Natural killer cell (primary cell): ENCODE measurements at regions of chr12 and their contacts with region 1.

Region 1: DNA sequence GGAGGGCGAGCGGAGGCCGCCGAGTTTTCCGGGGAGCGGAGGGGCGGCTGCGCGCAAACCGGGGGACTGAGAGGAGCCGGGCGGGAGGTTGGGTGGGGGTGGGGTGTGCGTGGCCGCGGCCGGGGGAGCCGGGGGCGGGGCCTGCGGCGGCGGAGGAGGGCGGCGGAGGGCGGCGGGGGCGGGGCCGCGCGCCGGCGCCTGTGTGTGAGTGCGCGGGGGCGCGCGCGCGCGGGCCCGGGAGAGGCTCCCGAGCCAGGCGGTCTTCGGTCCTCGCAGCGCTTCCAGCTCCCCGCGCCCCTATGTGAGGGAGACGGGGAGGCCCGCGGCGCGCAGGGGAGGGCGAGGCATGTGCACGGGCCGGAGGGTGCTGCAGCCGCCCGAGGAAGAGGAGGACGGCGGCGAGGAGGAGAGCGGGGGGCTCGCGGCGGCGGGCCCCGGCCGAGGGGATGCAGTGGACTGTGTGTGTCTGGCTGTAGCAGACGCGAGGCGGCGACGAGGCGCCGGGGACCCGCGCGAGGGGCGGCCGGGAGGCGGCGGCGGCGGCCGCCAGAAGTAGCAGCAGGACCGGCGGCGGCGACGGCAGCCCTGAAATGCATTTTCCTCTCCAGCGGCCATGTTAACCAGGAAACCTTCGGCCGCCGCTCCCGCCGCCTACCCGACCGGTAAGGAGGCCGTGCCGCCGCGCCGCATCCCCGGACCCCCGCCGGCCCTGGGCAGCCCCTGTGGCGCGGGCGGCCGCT is at the start of gene DYRK2:
- DNase-seq: peak; percentile 77 to 91
- ATAC-seq: peak; percentile 62 to 80 (median 73)
- H3K4me3 ChIP-seq: peak within 1 kb of the TSS; percentile 94
- H3K4me3 Mint-ChIP-seq: peak within 1 kb of the TSS; percentile 88
- H3K27ac ChIP-seq: peak within 1 kb of the TSS; percentile 92
- H3K27ac Mint-ChIP-seq: peak within 1 kb of the TSS; percentile 90 to 91
- H3K4me1 ChIP-seq: peaks cover 36% of the 10 kb centered on the region
- H3K4me1 Mint-ChIP-seq: peaks cover 34 to 44% of the 10 kb centered on the region in 2 donors
- H3K27me3 ChIP-seq: no peaks in the 10 kb centered on the region
- H3K27me3 Mint-ChIP-seq: no peaks in the 10 kb centered on the region
- CTCF ChIP-seq: no peak
- total RNA-seq, gene DYRK2: 88.1 to 108 (median 108) TPM

Region 2: DNA sequence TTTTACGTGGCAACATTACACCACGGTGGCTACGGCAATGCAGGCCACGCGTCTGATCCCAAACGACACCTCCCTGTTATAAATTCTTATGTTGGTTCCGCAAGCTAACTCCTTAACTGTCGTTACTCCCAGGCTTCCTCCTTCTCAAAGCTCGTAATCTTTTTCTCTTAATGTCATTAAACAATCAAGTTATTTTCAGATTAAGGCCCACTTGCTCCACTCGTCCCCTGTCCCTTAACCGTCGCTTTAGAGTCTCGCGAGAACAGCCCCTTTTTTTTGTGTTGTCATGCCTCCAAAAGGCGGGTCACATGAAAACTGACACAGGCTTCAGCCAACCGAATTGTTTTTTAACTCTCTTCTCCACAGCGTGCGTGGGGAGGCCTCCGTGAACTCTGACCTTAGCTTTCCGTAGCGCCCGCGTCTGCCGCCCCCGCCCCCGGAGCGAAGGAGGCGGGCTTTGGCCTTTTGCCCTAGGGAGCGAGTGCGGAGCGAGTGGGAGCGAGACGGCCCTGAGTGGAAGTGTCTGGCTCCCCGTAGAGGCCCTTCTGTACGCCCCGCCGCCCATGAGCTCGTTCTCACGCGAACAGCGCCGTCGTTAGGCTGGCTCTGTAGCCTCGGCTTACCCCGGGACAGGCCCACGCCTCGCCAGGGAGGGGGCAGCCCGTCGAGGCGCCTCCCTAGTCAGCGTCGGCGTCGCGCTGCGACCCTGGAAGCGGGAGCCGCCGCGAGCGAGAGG is 379.6 kb before region 1 on chr12 and contains the start of gene CAND1:
- intact Hi-C with region 1: loop called (anchors 2 kb)
- DNase-seq: peak; percentile 92 to 99
- ATAC-seq: peak; percentile 81 to 93 (median 83)
- H3K4me3 ChIP-seq: peak within 1 kb of the TSS; percentile 88
- H3K4me3 Mint-ChIP-seq: peak within 1 kb of the TSS; percentile 83
- H3K27ac ChIP-seq: peak within 1 kb of the TSS; percentile 97
- H3K27ac Mint-ChIP-seq: peak within 1 kb of the TSS; percentile 95 to 97
- H3K4me1 ChIP-seq: peaks cover 21% of the 10 kb centered on the region
- H3K4me1 Mint-ChIP-seq: peaks cover 36 to 43% of the 10 kb centered on the region in 2 donors
- H3K27me3 ChIP-seq: no peaks in the 10 kb centered on the region
- H3K27me3 Mint-ChIP-seq: no peaks in the 10 kb centered on the region
- CTCF ChIP-seq: no peak
- total RNA-seq, gene CAND1: 103 to 118 (median 104) TPM

Region 3: GRCh38 chr12:67441736-67442346 is 206.8 kb before region 1 on chr12:
- intact Hi-C with region 1: loop called (anchors 5 kb)
- DNase-seq: peak; percentile 59 to 88
- ATAC-seq: peak; percentile 82 to 97 (median 97)
- H3K4me3 ChIP-seq: no peak overlapping the region
- H3K4me3 Mint-ChIP-seq: peak overlapping the region; percentile 25
- H3K27ac ChIP-seq: no peak overlapping the region
- H3K27ac Mint-ChIP-seq: peak overlapping the region in 1 of 2 donors; percentile 77
- H3K4me1 ChIP-seq: peaks cover 15% of the 10 kb centered on the region
- H3K4me1 Mint-ChIP-seq: peaks cover 28 to 33% of the 10 kb centered on the region in 2 donors
- H3K27me3 ChIP-seq: no peaks in the 10 kb centered on the region
- H3K27me3 Mint-ChIP-seq: no peaks in the 10 kb centered on the region
- CTCF ChIP-seq: peak; percentile 83

Region 4: GRCh38 chr12:67519484-67520433 is 128.9 kb before region 1 on chr12:
- intact Hi-C with region 1: no loop called
- DNase-seq: no peak
- ATAC-seq: no peak
- H3K4me3 ChIP-seq: no peak overlapping the region
- H3K4me3 Mint-ChIP-seq: no peak overlapping the region
- H3K27ac ChIP-seq: no peak overlapping the region
- H3K27ac Mint-ChIP-seq: no peak overlapping the region
- H3K4me1 ChIP-seq: peaks cover 26% of the 10 kb centered on the region
- H3K4me1 Mint-ChIP-seq: peaks cover 16 to 25% of the 10 kb centered on the region in 2 donors
- H3K27me3 ChIP-seq: no peaks in the 10 kb centered on the region
- H3K27me3 Mint-ChIP-seq: no peaks in the 10 kb centered on the region
- CTCF ChIP-seq: no peak

Region 5: DNA sequence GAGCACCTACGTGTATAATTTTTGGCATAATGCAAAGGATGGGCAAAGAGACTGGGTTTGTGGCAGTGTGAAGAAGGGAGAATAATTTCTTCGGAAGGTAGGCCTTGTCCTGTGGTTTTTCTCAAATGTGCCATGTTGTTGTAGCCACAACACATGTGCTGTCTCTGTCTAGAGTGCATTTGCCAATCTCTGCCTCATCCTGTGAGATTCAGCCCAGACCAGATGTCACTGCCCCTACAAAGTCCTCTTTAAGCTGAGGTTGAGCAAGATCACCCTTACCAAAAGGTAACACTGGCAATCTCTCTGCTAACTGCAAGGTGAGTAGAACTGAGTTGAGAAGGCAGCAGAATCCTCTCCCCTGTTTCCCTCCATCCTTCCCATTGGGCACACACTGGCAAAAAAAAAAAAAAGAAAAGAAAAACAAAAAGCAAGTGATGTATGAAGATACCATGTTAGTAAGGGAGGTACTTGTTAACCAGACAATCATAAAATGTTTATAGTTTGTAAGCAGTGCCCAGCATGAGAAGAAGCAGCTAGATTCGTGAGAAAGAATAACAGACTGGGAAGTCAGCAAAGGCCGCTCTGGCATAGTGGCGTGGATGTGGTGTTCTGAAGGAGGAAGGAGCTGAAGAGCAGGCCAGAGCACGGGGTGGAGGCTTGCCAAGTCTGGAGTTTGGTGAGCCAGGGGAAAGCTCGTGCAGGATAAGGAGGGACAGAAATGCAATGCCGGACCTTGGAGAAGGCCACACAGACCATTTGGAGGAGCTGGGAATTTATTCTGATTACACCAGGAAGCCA is 18.8 kb after region 1 on chr12:
- intact Hi-C with region 1: loop called (anchors 2 kb)
- DNase-seq: no peak
- ATAC-seq: peak; percentile 52 to 73 (median 68)
- H3K4me3 ChIP-seq: no peak overlapping the region
- H3K4me3 Mint-ChIP-seq: peak overlapping the region; percentile 2
- H3K27ac ChIP-seq: peak overlapping the region; percentile 2
- H3K27ac Mint-ChIP-seq: peak overlapping the region; percentile 86 to 87
- H3K4me1 ChIP-seq: peaks cover 28% of the 10 kb centered on the region
- H3K4me1 Mint-ChIP-seq: peaks cover 70 to 73% of the 10 kb centered on the region in 2 donors
- H3K27me3 ChIP-seq: no peaks in the 10 kb centered on the region
- H3K27me3 Mint-ChIP-seq: no peaks in the 10 kb centered on the region
- CTCF ChIP-seq: no peak

Region 6: DNA sequence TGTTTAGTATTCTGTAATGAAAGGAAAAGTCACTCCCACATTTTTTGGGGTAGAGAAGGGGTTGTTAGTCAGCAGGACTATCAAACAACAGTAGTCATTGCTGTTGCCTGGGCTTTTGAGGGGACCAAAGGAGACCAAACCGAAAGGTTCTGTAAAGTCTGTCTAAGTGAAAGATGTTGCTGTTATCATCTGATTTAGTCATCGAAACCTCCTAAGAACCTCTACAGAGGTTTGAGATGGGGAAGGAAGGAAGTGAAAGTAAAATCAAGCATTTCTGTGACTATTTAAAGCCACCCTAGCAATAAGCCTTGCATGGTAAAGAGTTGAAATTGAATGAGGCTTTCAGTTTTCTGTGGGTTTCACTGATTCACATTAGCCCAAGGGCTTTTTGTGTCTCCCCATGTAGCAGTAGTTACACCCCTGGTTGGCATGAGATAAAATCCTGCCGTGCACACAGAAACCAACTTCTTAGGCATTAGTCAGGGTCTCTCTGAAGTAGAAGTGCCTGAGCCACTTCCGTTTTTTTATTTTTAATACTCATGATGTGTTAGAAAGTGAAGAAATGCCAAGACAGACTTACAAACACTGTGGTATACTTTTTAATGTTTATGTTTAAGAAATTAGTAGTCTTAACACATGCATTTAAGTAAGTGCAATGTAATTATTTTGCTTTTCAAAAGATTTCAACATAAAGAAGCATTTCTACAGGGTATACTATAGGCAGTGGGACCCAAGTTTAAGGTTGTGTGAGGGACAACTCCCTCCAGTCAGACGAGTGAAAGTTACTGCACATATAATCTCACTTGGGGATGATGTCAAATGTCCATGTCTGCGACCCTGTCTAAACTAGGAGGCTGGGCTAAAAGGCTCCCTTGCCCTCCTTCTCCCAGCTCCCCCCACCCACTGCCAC is 50.2 kb after region 1 on chr12:
- intact Hi-C with region 1: loop called (anchors 5 kb)
- DNase-seq: peak; percentile 31 to 67
- ATAC-seq: peak; percentile 84 to 87 (median 85)
- H3K4me3 ChIP-seq: peak overlapping the region; percentile 38
- H3K4me3 Mint-ChIP-seq: peak overlapping the region; percentile 84
- H3K27ac ChIP-seq: peak overlapping the region; percentile 63
- H3K27ac Mint-ChIP-seq: peak overlapping the region; percentile 87 to 90
- H3K4me1 ChIP-seq: peaks cover 12% of the 10 kb centered on the region
- H3K4me1 Mint-ChIP-seq: peaks cover 24 to 32% of the 10 kb centered on the region in 2 donors
- H3K27me3 ChIP-seq: no peaks in the 10 kb centered on the region
- H3K27me3 Mint-ChIP-seq: no peaks in the 10 kb centered on the region
- CTCF ChIP-seq: no peak

Region 7: DNA sequence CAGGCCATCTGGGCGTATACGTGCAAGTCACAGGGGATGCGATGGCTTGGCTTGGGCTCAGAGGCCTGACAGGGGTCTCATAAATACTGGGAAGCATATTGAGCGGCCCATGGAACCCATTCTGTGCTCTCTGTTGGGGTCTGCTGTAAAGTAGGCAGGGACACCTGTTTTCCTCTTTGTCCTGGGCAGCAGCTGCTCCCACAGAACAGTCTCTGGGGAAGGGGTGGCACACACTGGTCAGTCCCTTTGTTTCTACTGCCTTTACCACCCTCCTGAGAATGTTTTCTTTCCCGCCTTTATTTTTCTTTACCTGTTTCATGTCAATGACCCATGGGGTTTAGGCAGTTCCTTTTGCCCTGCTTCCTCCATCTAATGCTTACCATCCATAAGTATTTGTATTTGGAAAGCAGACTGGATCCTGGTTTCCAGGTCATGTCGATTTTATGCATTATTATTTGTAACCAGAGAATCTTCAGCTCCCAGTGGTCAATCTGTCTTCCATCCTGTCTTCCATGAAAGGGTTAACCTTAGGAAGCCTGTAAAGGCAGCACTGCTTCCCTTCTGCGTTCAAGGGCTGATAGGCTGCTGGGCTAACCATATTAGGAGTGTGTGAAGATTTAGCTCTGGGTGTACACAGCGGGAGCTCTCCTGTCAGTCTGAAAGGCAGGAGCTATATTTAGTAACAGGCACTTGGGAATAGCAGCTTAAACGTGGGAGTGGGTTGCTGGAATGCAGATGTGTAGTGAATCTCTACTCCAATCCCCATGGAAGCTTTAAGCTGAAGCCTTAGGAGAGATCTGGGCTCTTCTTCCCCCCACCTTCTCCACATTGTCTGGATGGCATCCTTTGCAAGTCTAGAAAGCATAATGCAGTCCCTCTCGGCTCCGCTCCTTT is 123.8 kb after region 1 on chr12:
- intact Hi-C with region 1: no loop called
- DNase-seq: no peak
- ATAC-seq: no peak
- H3K4me3 ChIP-seq: no peak overlapping the region
- H3K4me3 Mint-ChIP-seq: no peak overlapping the region
- H3K27ac ChIP-seq: no peak overlapping the region
- H3K27ac Mint-ChIP-seq: no peak overlapping the region
- H3K4me1 ChIP-seq: no peaks in the 10 kb centered on the region
- H3K4me1 Mint-ChIP-seq: no peaks in the 10 kb centered on the region
- H3K27me3 ChIP-seq: no peaks in the 10 kb centered on the region
- H3K27me3 Mint-ChIP-seq: peaks cover 0 to 3% of the 10 kb centered on the region in 2 donors
- CTCF ChIP-seq: no peak